ENCODE measurements at regions of chr3 and their contacts with region 1.

Region 1: DNA sequence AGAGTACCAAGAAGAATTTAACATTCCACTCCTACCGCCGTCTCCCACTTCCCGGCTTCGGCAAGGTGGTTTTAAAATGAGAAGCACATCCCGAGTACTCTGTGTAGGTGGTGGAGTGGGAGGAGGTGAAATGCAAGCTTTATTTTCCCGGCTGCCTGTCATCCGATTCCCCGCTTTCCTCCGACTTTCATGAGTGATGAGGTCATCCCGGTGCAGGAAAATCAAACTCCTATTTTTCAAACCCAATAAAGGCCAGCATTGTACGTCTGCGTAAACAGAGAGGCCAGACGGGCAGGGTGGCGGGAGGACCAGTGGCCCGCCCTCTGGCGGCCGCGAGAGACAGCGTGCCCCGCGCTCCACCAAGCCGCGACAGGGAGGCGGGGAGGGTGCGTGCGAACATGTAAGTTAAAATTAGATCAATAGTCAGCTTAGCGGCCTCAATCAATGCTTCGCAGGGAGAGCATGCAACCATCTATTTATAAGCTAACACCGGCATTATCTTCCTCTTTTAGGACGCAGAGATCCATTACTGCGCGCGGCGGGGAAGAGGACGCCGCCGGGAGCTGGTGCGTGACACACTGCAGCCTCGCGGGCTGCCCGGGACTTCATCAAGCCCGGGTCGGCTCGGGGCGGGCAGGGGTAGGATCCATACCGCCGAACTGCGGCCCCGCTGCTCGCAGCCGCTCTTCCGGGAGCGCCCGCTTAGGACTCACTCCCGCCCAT is 163.3 kb downstream of the CD47 start:
- DNase-seq: peak; percentile 53 to 62 (median 58)
- H3K4me3 ChIP-seq: peak overlapping the region; percentile 54 to 65
- H3K4me3 Mint-ChIP-seq: peak overlapping the region; percentile 86 to 92 (median 92)
- H3K27ac ChIP-seq: no peak overlapping the region
- H3K27ac Mint-ChIP-seq: peak overlapping the region in 5 of 7 donors; percentile 24 to 80 (median 67)
- H3K4me1 ChIP-seq: peaks cover 7% of the 10 kb centered on the region
- H3K4me1 Mint-ChIP-seq: peaks cover 7 to 15% (median 9%) of the 10 kb centered on the region in 4 donors
- H3K27me3 ChIP-seq: no peaks in the 10 kb centered on the region
- H3K27me3 Mint-ChIP-seq: peaks cover 0 to 4% of the 10 kb centered on the region in 2 donors

Region 2: GRCh38 chr3:107506458-107506857 is 421.1 kb before region 1 on chr3:
- CTCF ChIA-PET with region 1: no interaction called
- POLR2A ChIA-PET with region 1: no interaction called
- intact Hi-C with region 1: no loop called
- DNase-seq: no peak
- H3K4me3 ChIP-seq: no peak overlapping the region
- H3K4me3 Mint-ChIP-seq: no peak overlapping the region
- H3K27ac ChIP-seq: no peak overlapping the region
- H3K27ac Mint-ChIP-seq: no peak overlapping the region
- H3K4me1 ChIP-seq: no peaks in the 10 kb centered on the region
- H3K4me1 Mint-ChIP-seq: no peaks in the 10 kb centered on the region
- H3K27me3 ChIP-seq: no peaks in the 10 kb centered on the region
- H3K27me3 Mint-ChIP-seq: peaks cover 5 to 8% of the 10 kb centered on the region in 2 donors

Region 3: DNA sequence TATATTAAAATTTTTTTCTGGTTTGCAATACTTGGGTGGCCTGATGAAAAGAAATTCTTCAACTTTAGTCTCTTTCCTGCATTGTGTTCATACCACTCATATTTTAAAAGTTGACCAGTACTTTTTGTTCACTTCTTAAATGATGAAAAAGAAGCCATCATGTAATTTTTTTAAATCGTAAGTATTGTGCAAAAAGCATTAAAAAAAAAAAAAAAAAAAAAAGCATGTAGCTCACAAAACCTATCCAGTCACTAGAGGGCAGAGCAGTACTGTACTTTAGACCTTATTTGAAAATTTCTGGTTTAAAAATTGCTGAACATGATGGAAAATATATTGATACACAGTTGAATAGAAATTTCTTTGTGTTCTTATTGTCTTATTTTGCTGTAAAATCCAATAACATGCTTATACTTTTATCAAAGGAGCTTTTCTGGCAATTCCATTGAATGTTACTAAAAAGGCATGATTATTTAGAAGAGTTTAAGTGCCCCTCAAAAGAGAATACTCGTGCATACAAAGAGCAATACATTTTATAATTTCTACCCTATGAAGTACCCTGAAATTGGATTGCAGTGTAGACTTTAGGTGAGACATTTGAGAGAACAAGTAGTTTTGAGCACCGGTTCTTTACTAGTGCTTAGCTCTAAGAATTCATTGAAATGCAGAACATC is 267.1 kb before region 1 on chr3:
- CTCF ChIA-PET with region 1: interaction called, 19 read pairs
- POLR2A ChIA-PET with region 1: no interaction called
- intact Hi-C with region 1: loop called (anchors 1 kb)
- DNase-seq: peak in 4 of 5 donors; percentile 19 to 36 (median 27)
- H3K4me3 ChIP-seq: no peak overlapping the region
- H3K4me3 Mint-ChIP-seq: no peak overlapping the region
- H3K27ac ChIP-seq: no peak overlapping the region
- H3K27ac Mint-ChIP-seq: no peak overlapping the region
- H3K4me1 ChIP-seq: peaks cover 17% of the 10 kb centered on the region
- H3K4me1 Mint-ChIP-seq: peaks cover 18 to 28% (median 22%) of the 10 kb centered on the region in 4 donors
- H3K27me3 ChIP-seq: no peaks in the 10 kb centered on the region
- H3K27me3 Mint-ChIP-seq: no peaks in the 10 kb centered on the region

Region 4: DNA sequence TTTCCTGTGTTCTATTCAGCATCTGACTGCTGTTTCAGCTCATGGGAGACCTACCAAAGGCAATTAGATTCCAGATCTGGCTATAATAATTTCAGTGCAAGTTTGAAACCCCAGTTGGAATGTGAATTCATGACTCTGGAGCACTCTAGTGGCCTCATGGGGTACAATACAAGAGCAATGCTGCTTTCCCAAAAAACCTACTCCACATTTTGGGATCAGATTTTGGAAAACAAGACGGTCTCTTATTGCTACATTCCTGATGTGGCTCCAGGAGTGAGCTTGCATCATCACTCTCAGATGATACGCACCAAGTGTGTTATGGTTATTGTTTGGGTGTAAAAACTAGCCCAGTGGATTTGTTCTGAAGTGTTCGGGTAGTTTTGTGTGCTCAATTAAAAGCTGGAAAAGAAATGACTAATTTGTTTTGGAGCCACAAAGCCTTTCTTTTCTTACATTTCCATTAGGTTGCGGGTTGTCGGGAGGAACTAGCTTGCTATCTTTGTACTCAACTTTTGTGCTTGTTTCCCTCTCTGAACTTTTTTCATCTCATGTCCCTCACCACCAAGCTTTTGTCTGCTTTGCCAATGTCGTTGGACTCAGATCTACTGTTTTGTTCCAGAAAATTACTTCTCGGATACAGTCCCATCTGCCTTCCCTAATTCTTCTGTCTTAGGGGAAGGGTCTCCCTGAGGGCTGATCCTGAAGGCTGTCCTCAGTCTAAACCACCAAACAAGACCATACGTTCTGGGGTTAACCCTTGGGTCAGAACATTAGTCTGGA is 132.7 kb before region 1 on chr3:
- CTCF ChIA-PET with region 1: no interaction called
- POLR2A ChIA-PET with region 1: no interaction called
- intact Hi-C with region 1: no loop called
- DNase-seq: no peak
- H3K4me3 ChIP-seq: no peak overlapping the region
- H3K4me3 Mint-ChIP-seq: no peak overlapping the region
- H3K27ac ChIP-seq: no peak overlapping the region
- H3K27ac Mint-ChIP-seq: peak overlapping the region in 2 of 7 donors; percentile 2 to 54
- H3K4me1 ChIP-seq: peaks cover 8% of the 10 kb centered on the region
- H3K4me1 Mint-ChIP-seq: peaks cover 13 to 29% (median 18%) of the 10 kb centered on the region in 4 donors
- H3K27me3 ChIP-seq: no peaks in the 10 kb centered on the region
- H3K27me3 Mint-ChIP-seq: no peaks in the 10 kb centered on the region

Region 5: DNA sequence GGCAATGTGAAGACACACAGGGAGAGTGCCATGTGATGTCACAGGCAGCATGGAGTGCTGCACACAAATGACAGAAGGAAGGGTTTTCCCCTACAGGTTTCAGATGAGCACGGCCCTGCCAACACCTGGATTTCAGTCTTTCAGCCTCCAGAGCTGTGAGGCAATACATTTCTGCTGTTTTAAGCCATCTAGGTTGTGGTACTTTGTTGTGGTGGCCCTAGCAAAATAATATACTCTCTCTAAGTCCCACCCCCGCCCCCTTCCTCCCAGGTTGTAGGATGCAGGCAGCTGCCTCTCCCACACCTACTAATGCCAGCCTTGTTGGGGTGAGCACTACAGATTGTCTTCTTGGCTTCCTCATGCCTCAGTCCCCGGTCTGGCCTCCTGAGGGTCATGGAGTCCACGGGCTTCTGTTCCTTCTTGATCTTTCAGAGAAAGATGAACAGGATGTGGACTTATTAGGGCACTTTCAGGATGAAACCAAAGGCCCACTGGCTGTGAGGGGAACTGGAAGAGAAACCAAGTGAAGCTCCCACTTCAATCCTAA is 16.7 kb before region 1 on chr3:
- CTCF ChIA-PET with region 1: interaction called, 16 read pairs
- POLR2A ChIA-PET with region 1: no interaction called
- intact Hi-C with region 1: no loop called
- DNase-seq: peak in 2 of 5 donors; percentile 5 to 16
- H3K4me3 ChIP-seq: no peak overlapping the region
- H3K4me3 Mint-ChIP-seq: no peak overlapping the region
- H3K27ac ChIP-seq: no peak overlapping the region
- H3K27ac Mint-ChIP-seq: peak overlapping the region in 2 of 7 donors; percentile 30 to 72
- H3K4me1 ChIP-seq: peaks cover 8% of the 10 kb centered on the region
- H3K4me1 Mint-ChIP-seq: peaks cover 0 to 13% (median 8%) of the 10 kb centered on the region in 4 donors
- H3K27me3 ChIP-seq: no peaks in the 10 kb centered on the region
- H3K27me3 Mint-ChIP-seq: no peaks in the 10 kb centered on the region

Region 6: DNA sequence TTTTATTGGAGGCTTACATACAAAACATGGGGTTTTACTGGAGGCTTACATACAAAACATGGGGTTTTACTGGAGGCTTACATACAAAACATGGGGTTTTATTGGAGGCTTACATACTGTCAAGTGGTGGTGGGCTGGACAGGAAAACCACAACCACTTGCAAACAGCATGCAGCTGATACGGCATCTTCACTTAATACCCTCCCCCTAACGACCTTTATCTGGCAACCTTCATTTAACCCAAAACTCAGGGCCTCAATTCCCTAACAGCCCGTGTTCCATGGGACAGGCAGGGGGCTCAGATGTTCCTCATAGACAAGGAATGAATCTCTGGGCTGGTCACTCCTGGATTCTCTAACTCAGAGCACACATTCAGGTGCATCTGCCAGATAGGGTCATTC is 26.2 kb after region 1 on chr3:
- CTCF ChIA-PET with region 1: interaction called, 11 read pairs
- POLR2A ChIA-PET with region 1: no interaction called
- intact Hi-C with region 1: no loop called
- DNase-seq: no peak
- H3K4me3 ChIP-seq: no peak overlapping the region
- H3K4me3 Mint-ChIP-seq: peak overlapping the region in 5 of 8 donors; percentile 8 to 77 (median 55)
- H3K27ac ChIP-seq: no peak overlapping the region
- H3K27ac Mint-ChIP-seq: no peak overlapping the region
- H3K4me1 ChIP-seq: peaks cover 24% of the 10 kb centered on the region
- H3K4me1 Mint-ChIP-seq: peaks cover 25 to 47% (median 28%) of the 10 kb centered on the region in 4 donors
- H3K27me3 ChIP-seq: no peaks in the 10 kb centered on the region
- H3K27me3 Mint-ChIP-seq: no peaks in the 10 kb centered on the region

Region 7: DNA sequence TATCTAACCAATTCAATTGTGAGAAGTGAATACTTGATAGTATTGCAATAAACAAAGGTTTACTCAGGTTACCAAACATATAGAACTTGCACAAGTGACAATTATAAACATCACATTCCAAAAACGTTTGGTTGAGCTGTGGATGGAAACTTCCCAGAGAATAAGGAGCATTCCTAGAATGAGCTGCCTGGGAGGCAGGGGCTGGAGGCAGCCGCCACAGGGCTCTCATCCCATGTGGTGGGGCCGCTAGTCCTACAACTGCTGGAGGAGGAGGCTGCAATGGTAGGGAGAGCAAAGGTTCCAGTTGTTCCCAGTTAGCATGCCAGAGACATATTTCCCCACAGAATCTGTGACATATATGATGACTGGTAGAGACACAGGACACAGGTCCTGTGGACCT is 113.0 kb after region 1 on chr3:
- CTCF ChIA-PET with region 1: interaction called, 19 read pairs
- POLR2A ChIA-PET with region 1: no interaction called
- intact Hi-C with region 1: loop called (anchors 10 kb)
- DNase-seq: no peak
- H3K4me3 ChIP-seq: no peak overlapping the region
- H3K4me3 Mint-ChIP-seq: no peak overlapping the region
- H3K27ac ChIP-seq: no peak overlapping the region
- H3K27ac Mint-ChIP-seq: peak overlapping the region in 3 of 7 donors; percentile 42 to 56 (median 50)
- H3K4me1 ChIP-seq: no peaks in the 10 kb centered on the region
- H3K4me1 Mint-ChIP-seq: peaks cover 15 to 41% (median 20%) of the 10 kb centered on the region in 4 donors
- H3K27me3 ChIP-seq: no peaks in the 10 kb centered on the region
- H3K27me3 Mint-ChIP-seq: no peaks in the 10 kb centered on the region

Region 8: DNA sequence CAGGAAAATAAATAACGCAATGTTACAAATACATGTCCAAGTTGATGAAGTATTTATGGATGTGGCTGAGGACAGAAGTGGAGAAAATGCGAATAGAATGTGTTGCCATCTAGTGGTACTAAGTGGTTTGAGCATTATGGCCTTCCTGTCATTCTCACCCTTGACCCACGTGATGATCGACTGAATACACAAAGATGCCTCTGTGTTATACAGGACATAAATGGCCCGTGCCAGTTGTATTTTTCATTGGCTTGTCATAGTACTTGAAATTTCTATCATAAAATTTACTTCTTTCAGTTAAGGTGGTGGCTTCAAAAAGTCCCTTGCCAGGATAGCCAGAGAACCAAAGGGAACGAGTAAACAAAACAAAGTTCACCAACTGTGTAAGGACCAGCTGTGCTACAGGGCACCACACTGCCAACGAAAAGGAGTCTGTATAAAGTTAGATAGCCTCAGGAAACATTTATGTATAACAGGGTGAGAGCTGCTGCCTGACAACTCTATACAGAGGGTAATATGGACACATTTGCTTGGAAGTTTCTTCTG is 479.2 kb after region 1 on chr3:
- CTCF ChIA-PET with region 1: interaction called, 27 read pairs
- POLR2A ChIA-PET with region 1: no interaction called
- intact Hi-C with region 1: loop called (anchors 5 kb)
- DNase-seq: peak in 3 of 5 donors; percentile 24 to 61 (median 48)
- H3K4me3 ChIP-seq: no peak overlapping the region
- H3K4me3 Mint-ChIP-seq: no peak overlapping the region
- H3K27ac ChIP-seq: no peak overlapping the region
- H3K27ac Mint-ChIP-seq: peak overlapping the region in 1 of 7 donors; percentile 8
- H3K4me1 ChIP-seq: no peaks in the 10 kb centered on the region
- H3K4me1 Mint-ChIP-seq: peaks cover 0 to 2% (median 0%) of the 10 kb centered on the region in 4 donors
- H3K27me3 ChIP-seq: no peaks in the 10 kb centered on the region
- H3K27me3 Mint-ChIP-seq: no peaks in the 10 kb centered on the region